ENCODE measurements at regions of chr12 and their contacts with region 1.

Region 1: GRCh38 chr12:124036674-124037109 is 63.7 kb downstream of the ZNF664 start:
- DNase-seq: no peak
- H3K4me3 ChIP-seq: no peak overlapping the region
- H3K27ac ChIP-seq: no peak overlapping the region
- H3K4me1 ChIP-seq: peaks cover 7% of the 10 kb centered on the region
- H3K27me3 ChIP-seq: no peaks in the 10 kb centered on the region
- CTCF ChIP-seq: peak; percentile 79 to 92 (median 86)
- POLR2A ChIP-seq: no peak

Region 2: DNA sequence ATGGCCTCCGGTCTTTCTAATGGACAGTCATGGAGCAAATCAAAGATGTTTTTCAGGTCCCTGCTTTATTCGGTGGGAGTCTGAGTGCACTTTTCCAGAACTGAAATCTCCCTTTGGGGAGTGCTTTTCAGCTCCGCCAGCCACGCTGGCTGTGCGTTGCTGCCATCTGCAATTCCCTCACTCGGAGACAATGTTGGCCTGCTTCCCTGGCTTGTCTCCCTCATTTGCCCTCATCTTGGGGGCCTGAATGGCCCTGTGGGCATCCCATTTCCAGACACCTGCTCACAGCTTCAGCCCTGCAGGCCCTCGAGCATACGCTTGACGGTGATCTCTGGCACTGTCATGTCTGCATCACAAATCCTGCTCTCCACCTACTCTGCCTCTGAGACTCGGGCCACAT is 167.9 kb before region 1 on chr12:
- intact Hi-C with region 1: no loop called
- DNase-seq: no peak
- H3K4me3 ChIP-seq: no peak overlapping the region
- H3K27ac ChIP-seq: no peak overlapping the region
- H3K4me1 ChIP-seq: no peaks in the 10 kb centered on the region
- H3K27me3 ChIP-seq: no peaks in the 10 kb centered on the region
- CTCF ChIP-seq: no peak
- POLR2A ChIP-seq: no peak

Region 3: GRCh38 chr12:124018539-124018938 is 18.2 kb before region 1 on chr12:
- intact Hi-C with region 1: no loop called
- DNase-seq: no peak
- H3K4me3 ChIP-seq: no peak overlapping the region
- H3K27ac ChIP-seq: peak overlapping the region; percentile 18
- H3K4me1 ChIP-seq: peaks cover 14% of the 10 kb centered on the region
- H3K27me3 ChIP-seq: no peaks in the 10 kb centered on the region
- CTCF ChIP-seq: no peak
- POLR2A ChIP-seq: no peak

Region 4: DNA sequence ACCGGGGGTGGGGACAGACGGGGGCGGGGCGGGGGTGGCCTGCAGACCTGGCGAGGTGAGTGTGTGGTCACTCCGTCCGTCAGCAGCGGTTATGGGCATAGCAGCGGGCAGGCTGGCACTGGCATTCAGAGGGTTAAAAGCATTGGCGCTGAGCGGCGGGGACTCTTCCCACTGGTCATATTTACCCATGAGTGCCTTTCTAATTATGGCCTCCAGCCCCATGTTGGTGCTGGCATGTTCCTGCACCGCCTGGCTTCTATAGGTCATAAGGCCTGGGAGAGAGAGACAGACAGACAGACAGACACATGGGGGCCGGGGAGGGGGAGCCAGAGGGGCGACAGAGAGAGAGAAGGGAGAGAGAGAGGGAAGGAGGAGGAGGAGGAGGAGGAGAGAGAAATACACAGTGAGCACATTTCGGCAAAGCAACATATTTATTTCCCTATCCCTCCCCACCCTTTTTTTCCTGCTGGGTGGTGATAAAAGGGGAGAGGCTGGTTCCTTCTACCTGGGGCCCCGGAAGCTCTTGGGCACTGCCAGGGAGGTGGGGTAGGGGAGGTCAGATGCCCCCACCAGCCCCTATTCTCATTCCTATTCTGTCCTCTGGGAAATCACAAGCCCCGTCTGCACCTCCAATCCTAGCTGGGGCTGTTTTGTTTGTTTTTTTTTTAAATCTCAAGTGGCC is 290.8 kb after region 1 on chr12:
- intact Hi-C with region 1: loop called (anchors 5 kb)
- DNase-seq: no peak
- H3K4me3 ChIP-seq: no peak overlapping the region
- H3K27ac ChIP-seq: peak overlapping the region; percentile 57
- H3K4me1 ChIP-seq: peaks cover 4% of the 10 kb centered on the region
- H3K27me3 ChIP-seq: no peaks in the 10 kb centered on the region
- CTCF ChIP-seq: no peak
- POLR2A ChIP-seq: no peak